Breast epithelium (tissue), 4 donors: ENCODE measurements at regions of chr4 and their contacts with region 1.

Region 1: GRCh38 chr4:173243917-173244658 is 75.5 kb downstream of the GALNT7 start:
- DNase-seq: no peak
- H3K4me3 ChIP-seq: no peak overlapping the region
- H3K27ac ChIP-seq: no peak overlapping the region
- H3K4me1 ChIP-seq: no peaks in the 10 kb centered on the region
- H3K27me3 ChIP-seq: no peaks in the 10 kb centered on the region
- CTCF ChIP-seq: no peak
- POLR2A ChIP-seq: no peak

Region 2: GRCh38 chr4:172786039-172786792 is 457.9 kb before region 1 on chr4:
- intact Hi-C with region 1: loop called (anchors 10 kb)
- DNase-seq: no peak
- H3K4me3 ChIP-seq: no peak overlapping the region
- H3K27ac ChIP-seq: no peak overlapping the region
- H3K4me1 ChIP-seq: no peaks in the 10 kb centered on the region
- H3K27me3 ChIP-seq: no peaks in the 10 kb centered on the region
- CTCF ChIP-seq: no peak
- POLR2A ChIP-seq: no peak